A549 (cell line): ENCODE measurements at regions of chr17 and their contacts with region 1.

Region 1: DNA sequence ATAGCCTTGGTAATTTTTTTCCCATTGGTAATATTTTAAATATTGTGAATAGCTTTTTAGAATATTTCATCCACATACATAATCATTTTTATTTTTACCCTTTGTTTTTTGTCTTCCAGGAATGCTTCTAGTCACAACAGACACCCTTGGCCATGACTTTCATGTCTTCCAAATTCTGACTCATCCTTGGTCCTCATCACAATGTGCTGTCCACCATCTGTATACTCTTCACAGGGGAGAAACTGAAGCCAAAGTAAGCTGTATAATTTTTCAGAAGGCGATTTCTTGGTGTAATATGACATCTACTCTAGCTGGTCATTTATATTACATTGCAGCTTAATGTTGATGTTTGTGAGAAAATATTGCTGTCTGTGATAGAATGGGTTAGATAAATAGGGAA is 269.4 kb downstream of the BCAS3 start:
- DNase-seq: no peak
- ATAC-seq: no peak
- H3K4me3 ChIP-seq: no peak overlapping the region
- H3K27ac ChIP-seq: no peak overlapping the region
- H3K4me1 ChIP-seq: no peaks in the 10 kb centered on the region
- CTCF ChIP-seq: no peak
- EP300 ChIP-seq: no peak
- POLR2A ChIP-seq: no peak
- RAD21 ChIP-seq: no peak

Region 2: DNA sequence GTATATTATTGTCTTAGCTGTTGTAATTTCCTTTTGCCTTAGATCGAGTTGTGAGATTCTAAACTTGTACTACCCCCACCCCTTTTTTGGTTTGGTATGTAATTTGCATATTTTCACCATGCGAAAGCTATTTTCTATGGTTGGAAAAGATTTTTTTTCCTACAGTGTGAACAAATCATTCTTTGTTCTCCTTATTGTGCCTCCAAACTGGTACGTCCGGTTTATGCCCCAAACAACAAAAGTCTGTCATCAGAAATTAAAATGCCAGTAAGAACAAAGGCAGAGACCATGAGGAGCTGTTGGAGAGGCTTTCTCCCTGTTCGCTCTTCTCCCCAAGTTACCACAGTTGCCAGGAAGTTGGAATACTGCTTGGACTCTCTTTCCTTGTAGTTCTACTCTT is 203.3 kb before region 1 on chr17:
- CTCF ChIA-PET with region 1: no interaction called
- POLR2A ChIA-PET with region 1: interaction called, 11 read pairs
- DNase-seq: no peak
- ATAC-seq: no peak
- H3K4me3 ChIP-seq: no peak overlapping the region
- H3K27ac ChIP-seq: no peak overlapping the region
- H3K4me1 ChIP-seq: no peaks in the 10 kb centered on the region
- CTCF ChIP-seq: no peak
- EP300 ChIP-seq: no peak
- POLR2A ChIP-seq: no peak
- RAD21 ChIP-seq: no peak